Breast epithelium (tissue), 4 donors: ENCODE measurements at regions of chr5 and their contacts with region 1.

Region 1: GRCh38 chr5:2052687-2053086 is 170.0 kb upstream of the IRX4 start:
- DNase-seq: no peak
- H3K4me3 ChIP-seq: no peak overlapping the region
- H3K27ac ChIP-seq: no peak overlapping the region
- H3K4me1 ChIP-seq: no peaks in the 10 kb centered on the region
- H3K27me3 ChIP-seq: no peaks in the 10 kb centered on the region
- CTCF ChIP-seq: no peak
- POLR2A ChIP-seq: no peak

Region 2: DNA sequence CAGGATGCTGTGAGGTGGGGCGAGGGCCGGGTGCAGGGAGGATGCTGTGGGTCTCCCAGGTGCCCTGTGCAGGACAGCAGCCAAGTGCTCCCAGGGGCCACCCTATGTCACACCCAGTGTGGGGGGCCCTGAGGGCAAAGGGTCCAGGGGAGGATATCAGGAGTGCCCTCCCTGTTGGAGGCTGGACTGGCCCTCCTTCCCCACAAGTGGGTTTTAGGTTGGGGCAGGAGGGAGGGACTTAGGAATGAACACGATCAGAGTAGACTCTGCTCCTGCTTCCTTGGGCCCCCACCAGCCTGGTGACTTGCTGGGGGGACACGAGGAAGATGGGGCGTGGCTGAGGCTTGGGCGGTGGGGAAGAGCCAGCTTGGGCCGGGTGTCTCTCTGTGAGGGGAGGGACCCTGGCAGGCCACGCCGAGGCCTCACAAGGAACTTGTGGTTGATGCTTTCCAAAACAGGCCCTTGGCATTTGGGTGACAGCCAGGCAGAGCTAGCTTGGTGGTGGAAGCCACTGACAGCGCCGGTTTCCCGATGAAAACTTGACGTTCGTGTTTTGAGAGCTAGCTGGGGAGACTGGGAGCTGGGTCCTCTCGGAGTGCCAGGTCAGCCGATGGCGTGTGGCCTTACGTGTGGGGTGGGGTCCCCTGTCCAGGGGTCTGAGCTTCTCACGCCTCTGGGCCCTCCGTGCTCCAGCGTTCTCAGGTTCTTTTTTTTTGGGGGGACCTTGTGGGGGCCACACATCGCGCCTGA is 399.9 kb before region 1 on chr5:
- intact Hi-C with region 1: no loop called
- DNase-seq: no peak
- H3K4me3 ChIP-seq: no peak overlapping the region
- H3K27ac ChIP-seq: no peak overlapping the region
- H3K4me1 ChIP-seq: peaks cover 0 to 4% of the 10 kb centered on the region in 2 donors
- H3K27me3 ChIP-seq: peaks cover 0 to 25% of the 10 kb centered on the region in 2 donors
- CTCF ChIP-seq: no peak
- POLR2A ChIP-seq: no peak

Region 3: GRCh38 chr5:2173151-2173551 is 120.5 kb after region 1 on chr5:
- intact Hi-C with region 1: no loop called
- DNase-seq: no peak
- H3K4me3 ChIP-seq: no peak overlapping the region
- H3K27ac ChIP-seq: no peak overlapping the region
- H3K4me1 ChIP-seq: no peaks in the 10 kb centered on the region
- H3K27me3 ChIP-seq: peaks cover 0 to 28% of the 10 kb centered on the region in 2 donors
- CTCF ChIP-seq: no peak
- POLR2A ChIP-seq: no peak

Region 4: DNA sequence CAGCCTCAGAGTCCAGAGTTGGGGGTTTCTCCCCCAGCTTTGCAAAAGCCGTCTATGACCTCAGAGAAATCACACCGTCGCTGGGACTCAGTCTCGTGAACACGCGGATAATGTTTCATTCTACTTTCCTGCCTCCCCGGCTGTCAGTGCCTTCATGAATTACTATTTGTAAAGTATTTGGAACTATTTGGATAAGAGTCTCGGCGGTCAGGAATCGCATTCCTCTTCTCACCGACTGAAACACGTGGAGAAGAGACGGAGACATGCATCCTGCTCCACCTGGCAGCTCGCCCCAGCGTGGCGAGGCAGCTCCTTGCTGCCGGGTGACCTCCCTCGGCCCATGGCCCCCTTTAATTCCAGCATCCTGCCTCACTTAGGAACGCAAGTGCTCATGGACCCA is 674.9 kb after region 1 on chr5:
- intact Hi-C with region 1: loop called (anchors 5 kb)
- DNase-seq: no peak
- H3K4me3 ChIP-seq: no peak overlapping the region
- H3K27ac ChIP-seq: no peak overlapping the region
- H3K4me1 ChIP-seq: no peaks in the 10 kb centered on the region
- H3K27me3 ChIP-seq: no peaks in the 10 kb centered on the region
- CTCF ChIP-seq: no peak
- POLR2A ChIP-seq: no peak